ENCODE measurements at regions of chr9 and their contacts with region 1.

Region 1: GRCh38 chr9:102740577-102740976 is 254.6 kb upstream of the CYLC2 start:
- DNase-seq: no peak
- H3K4me3 ChIP-seq: no peak overlapping the region
- H3K27ac ChIP-seq: no peak overlapping the region
- H3K4me1 ChIP-seq: no peaks in the 10 kb centered on the region
- H3K27me3 ChIP-seq: no peaks in the 10 kb centered on the region
- CTCF ChIP-seq: no peak
- EP300 ChIP-seq: no peak
- POLR2A ChIP-seq: no peak

Region 2: DNA sequence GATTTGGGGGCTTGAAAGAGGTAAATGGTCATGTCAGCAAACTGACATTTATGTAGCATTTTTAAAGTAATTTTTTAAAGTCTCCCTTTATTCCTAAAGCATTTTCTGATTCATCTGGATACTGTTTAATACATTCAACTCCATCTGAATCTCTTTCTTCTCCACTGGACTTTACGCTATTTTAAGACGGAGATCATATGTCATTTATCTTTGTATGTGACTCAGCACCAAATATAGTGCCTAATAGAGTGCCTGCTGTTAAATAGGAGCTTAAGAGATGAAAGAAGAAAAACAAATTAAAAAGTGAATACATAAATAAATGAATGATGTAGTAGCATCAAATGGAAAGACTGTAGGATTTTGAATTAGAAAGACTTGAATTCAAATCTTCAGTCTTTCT is 804.7 kb after region 1 on chr9:
- in situ Hi-C with region 1: no loop called
- intact Hi-C with region 1: loop called (anchors 5 kb)
- DNase-seq: no peak
- H3K4me3 ChIP-seq: no peak overlapping the region
- H3K27ac ChIP-seq: no peak overlapping the region
- H3K4me1 ChIP-seq: no peaks in the 10 kb centered on the region
- H3K27me3 ChIP-seq: no peaks in the 10 kb centered on the region
- CTCF ChIP-seq: no peak
- EP300 ChIP-seq: no peak
- POLR2A ChIP-seq: no peak

Measured in transverse colon (tissue), 4 donors.